ENCODE measurements at regions of chr7 and their contacts with region 1.

Region 1: DNA sequence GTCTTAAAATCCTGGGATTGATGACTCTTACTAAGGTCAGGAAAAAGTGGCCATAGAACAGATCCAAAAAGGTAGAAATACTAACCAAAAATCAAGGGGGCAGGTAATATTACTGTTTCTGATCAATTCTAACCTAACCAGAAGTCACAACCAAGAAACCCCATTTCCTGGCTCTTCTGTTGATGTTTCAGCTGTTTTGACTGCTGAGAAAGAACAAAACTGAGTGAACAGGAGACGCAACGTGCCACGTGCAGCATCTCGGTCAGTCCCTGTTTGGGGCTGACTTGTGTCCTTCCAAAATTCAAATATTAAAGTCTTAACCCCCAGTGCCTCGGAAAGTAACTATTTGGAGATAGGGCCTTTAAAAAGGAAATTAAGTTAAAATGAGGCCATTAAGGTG is 56.8 kb downstream of the JAZF1 start:
- DNase-seq: no peak
- ATAC-seq: no peak
- H3K4me3 ChIP-seq: no peak overlapping the region
- H3K27ac ChIP-seq: no peak overlapping the region
- H3K4me1 ChIP-seq: peaks cover 0 to 59% (median 27%) of the 10 kb centered on the region in 9 donors
- H3K27me3 ChIP-seq: no peaks in the 10 kb centered on the region
- CTCF ChIP-seq: no peak

Region 2: GRCh38 chr7:27825891-27826290 is 297.9 kb before region 1 on chr7:
- intact Hi-C with region 1: no loop called
- DNase-seq: no peak
- ATAC-seq: peak in 3 of 8 donors; percentile 49 to 85 (median 58)
- H3K4me3 ChIP-seq: no peak overlapping the region
- H3K27ac ChIP-seq: peak overlapping the region in 1 of 10 donors; percentile 16
- H3K4me1 ChIP-seq: peaks cover 0 to 17% (median 12%) of the 10 kb centered on the region in 9 donors
- H3K27me3 ChIP-seq: no peaks in the 10 kb centered on the region
- CTCF ChIP-seq: no peak

Region 3: GRCh38 chr7:28020302-28020940 is 103.3 kb before region 1 on chr7:
- intact Hi-C with region 1: no loop called
- DNase-seq: peak; percentile 49 to 63
- ATAC-seq: peak; percentile 73 to 90 (median 82)
- H3K4me3 ChIP-seq: no peak overlapping the region
- H3K27ac ChIP-seq: no peak overlapping the region
- H3K4me1 ChIP-seq: peaks cover 3 to 57% (median 21%) of the 10 kb centered on the region in 9 donors
- H3K27me3 ChIP-seq: no peaks in the 10 kb centered on the region
- CTCF ChIP-seq: peak; percentile 74 to 95 (median 87)

Region 4: GRCh38 chr7:28052933-28053332 is 70.8 kb before region 1 on chr7:
- intact Hi-C with region 1: no loop called
- DNase-seq: no peak
- ATAC-seq: no peak
- H3K4me3 ChIP-seq: no peak overlapping the region
- H3K27ac ChIP-seq: no peak overlapping the region
- H3K4me1 ChIP-seq: peaks cover 0 to 41% (median 20%) of the 10 kb centered on the region in 9 donors
- H3K27me3 ChIP-seq: no peaks in the 10 kb centered on the region
- CTCF ChIP-seq: no peak

Region 5: GRCh38 chr7:28163949-28164348 is 40.2 kb after region 1 on chr7:
- intact Hi-C with region 1: loop called in 1 of 10 experiments (anchors 5 kb)
- DNase-seq: no peak
- ATAC-seq: peak in 3 of 8 donors; percentile 24 to 31 (median 27)
- H3K4me3 ChIP-seq: no peak overlapping the region
- H3K27ac ChIP-seq: no peak overlapping the region
- H3K4me1 ChIP-seq: peaks cover 0 to 51% (median 24%) of the 10 kb centered on the region in 9 donors
- H3K27me3 ChIP-seq: no peaks in the 10 kb centered on the region
- CTCF ChIP-seq: no peak